Left colon (tissue), 2 donors: ENCODE measurements at regions of chr15 and their contacts with region 1.

Region 1: GRCh38 chr15:93997084-93997918 is 234.1 kb upstream of the MCTP2 start:
- DNase-seq: no peak
- ATAC-seq: peak; percentile 48

Region 2: DNA sequence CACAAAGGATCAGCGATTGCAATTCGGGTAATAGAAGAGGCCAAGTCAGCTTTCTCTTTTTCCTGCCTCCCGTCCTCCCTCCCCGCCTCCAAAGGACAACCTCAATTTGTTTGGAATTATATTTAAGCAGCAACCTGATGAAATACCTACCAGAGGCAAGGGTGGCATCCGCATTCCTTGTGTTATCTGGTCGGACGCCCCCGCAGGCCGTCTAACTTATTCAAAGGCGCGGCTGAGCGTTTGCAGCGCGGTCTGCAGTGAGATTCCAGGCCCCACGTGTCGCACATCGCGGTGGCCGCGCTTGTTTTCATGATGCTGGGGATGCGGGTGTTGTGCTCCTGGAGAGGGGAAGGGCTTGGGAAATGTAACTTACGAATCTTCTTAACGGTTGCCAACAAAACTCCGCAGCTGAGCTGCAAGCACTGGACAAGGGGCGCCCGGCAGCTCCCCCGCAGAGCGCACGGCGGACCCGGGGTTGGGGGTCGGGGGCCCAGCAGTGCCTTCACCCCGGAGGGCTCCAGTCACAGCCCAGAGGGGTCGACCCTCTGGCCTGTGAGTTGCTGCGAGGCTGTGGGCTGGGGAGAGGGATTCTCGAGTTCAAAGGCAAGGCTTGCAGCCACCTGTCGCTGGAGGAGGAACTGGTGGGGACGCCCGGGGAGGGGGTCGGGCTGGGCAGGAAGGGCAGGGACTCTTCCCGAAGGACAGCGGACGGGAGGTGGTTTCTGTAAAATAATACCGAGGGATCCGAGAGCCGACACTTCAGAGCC is 887.8 kb before region 1 on chr15:
- intact Hi-C with region 1: no loop called
- DNase-seq: no peak
- ATAC-seq: no peak

Region 3: DNA sequence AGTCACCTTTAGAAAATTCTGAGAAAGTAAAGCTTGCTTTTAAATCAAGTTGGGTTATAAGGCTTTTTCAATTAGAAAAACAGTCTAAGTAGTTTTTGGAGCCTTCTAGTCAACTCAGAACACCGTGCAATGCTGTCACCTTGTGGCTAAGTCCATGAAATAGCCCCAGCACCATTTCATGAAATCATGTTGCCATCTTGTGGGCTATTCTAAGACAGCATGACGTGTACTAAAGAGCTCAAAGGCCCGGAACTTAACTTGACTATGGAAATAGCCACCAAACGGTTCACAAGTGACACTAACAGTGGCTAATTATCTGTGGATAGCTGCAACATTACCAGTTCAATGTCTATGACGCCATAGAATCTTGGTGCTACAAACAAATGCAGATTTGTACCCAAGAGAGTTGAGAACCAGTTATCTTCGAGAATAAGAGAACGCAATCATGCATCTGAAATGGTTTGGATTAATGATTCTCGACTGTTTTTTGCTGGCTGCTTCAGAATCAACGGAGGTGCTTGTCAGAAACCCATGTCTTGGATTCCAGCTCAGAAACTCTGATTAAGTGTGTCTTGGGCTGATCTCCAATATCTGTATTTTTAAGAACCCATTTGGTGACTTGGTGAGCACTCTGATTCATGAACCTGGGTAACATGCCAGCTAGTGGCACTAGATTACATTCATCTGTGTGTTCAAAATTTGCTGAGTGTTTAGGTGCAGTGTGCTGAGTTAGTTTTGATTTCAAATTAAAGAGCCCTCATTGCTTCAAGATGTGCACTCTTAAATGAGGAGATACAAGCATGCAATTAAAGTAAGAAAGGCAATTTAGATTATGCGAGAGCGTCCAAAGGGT is 122.8 kb after region 1 on chr15:
- intact Hi-C with region 1: loop called in 1 of 2 experiments (anchors 10 kb)
- DNase-seq: peak; percentile 38 to 47
- ATAC-seq: peak; percentile 99